Activated CD4-positive, alpha-beta T cell treated with anti-CD3 and anti-CD28 coated beads, Interleukin-2, amount 10 ng/mL, durations not matched to agents 24 days and 14 days (primary cell): ENCODE measurements at regions of chr6 and their contacts with region 1.

Region 1: GRCh38 chr6:33161354-33162331 is 30.6 kb downstream of the COL11A2 start:
- DNase-seq: peak; percentile 96
- H3K4me3 Mint-ChIP-seq: peak overlapping the region; percentile 87
- H3K27ac Mint-ChIP-seq: peak overlapping the region; percentile 86
- H3K4me1 Mint-ChIP-seq: peaks cover 14% of the 10 kb centered on the region
- H3K27me3 Mint-ChIP-seq: peaks cover under 1% of the 10 kb centered on the region

Region 2: DNA sequence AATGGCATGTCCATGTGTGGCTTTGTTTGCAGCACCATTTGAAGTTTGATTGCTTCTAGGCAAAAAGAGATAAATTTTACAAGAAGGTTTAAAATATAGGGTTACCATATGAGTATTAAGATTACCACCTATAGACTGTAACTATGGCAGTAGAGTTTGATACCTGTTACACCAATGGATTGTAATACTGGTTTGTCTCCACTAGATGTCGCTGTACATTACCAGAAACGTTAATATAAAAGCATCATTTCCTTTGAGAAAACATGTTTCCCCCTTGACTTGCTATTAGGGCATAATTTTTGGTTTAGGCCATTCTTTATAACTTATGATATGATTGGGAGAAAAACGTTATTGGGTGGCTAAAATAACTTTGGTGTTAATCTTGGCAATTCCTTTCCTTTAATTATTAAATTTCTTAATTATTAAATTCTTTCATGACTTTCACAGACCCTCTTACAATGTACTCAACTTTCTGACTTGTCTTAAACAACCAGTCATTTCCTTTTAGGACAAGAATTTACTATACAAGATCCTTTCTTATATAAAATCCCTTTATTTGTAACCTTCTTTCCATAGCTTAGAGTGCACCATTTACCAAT is 43.0 kb before region 1 on chr6:
- intact Hi-C with region 1: loop called (anchors 5 kb)
- DNase-seq: peak; percentile 81
- H3K4me3 Mint-ChIP-seq: no peak overlapping the region
- H3K27ac Mint-ChIP-seq: no peak overlapping the region
- H3K4me1 Mint-ChIP-seq: peaks cover 12% of the 10 kb centered on the region
- H3K27me3 Mint-ChIP-seq: peaks cover 70% of the 10 kb centered on the region